Mammary epithelial cell (primary cell): ENCODE measurements at regions of chr6 and their contacts with region 1.

Region 1: GRCh38 chr6:30914076-30914853 is at the start of gene VARS2:
- DNase-seq: peak; percentile 94
- H3K4me3 ChIP-seq: peak within 1 kb of the TSS; percentile 23 to 65 (median 50)
- H3K27ac ChIP-seq: peak within 1 kb of the TSS; percentile 55
- H3K4me1 ChIP-seq: peaks cover 26% of the 10 kb centered on the region
- H3K27me3 ChIP-seq: no peaks in the 10 kb centered on the region
- CTCF ChIP-seq: peak; percentile 26 to 59
- total RNA-seq, gene VARS2: 17.7 to 25.7 TPM

Region 2: GRCh38 chr6:30816791-30817739 is 97.2 kb before region 1 on chr6:
- CTCF ChIA-PET with region 1: no interaction called
- dilution Hi-C with region 1: no loop called
- in situ Hi-C with region 1: no loop called
- intact Hi-C with region 1: no loop called
- DNase-seq: no peak
- H3K4me3 ChIP-seq: no peak overlapping the region
- H3K27ac ChIP-seq: no peak overlapping the region
- H3K4me1 ChIP-seq: peaks cover 56% of the 10 kb centered on the region
- H3K27me3 ChIP-seq: no peaks in the 10 kb centered on the region
- CTCF ChIP-seq: no peak

Region 3: DNA sequence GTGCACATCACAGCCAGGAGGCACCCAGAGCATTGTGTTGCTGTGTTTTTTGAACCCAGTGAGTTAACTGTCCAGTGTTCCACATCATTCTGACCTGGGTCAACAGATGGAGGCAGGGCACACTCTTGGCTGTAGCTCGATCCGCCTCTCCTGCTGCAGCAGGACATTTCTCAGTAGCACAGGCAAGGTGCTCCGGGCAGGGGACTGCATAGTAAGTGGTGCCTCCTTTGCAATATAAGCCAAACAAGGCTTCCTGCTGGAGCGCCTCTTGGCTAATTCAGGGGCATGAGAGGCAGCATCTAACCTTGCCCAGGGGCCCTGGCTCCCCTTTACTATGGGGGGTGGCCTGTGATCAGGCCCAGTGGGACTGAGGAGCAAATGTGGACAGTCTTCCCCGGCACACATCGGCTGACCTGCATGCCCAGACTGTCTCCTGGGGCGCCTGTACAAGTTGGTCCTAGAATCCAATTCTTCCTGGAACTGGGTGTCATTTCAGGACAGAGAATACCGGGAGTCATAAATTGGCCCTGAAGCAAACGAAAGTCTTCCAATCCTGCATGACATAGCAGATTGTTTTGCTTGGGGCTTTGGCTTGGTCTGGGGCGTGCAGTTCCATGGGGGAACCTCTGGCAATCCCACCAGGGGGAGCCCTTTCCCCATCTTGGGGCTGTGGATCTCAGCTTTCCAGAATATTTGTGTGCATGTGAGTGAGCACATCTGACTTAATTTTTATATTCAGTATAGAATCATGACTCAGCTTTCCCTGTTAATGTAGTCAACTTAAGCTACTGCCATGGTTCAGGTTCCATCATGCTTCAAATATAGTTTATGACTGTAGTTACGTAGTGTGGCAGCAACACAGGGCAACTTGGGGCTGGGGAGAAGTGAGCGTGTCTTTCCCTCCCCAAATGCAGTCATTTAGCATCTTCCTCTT is 86.0 kb before region 1 on chr6:
- CTCF ChIA-PET with region 1: interaction called, 9 read pairs
- dilution Hi-C with region 1: no loop called
- in situ Hi-C with region 1: no loop called
- intact Hi-C with region 1: loop called (anchors 1 kb)
- DNase-seq: peak; percentile 88
- H3K4me3 ChIP-seq: no peak overlapping the region
- H3K27ac ChIP-seq: peak overlapping the region; percentile 58
- H3K4me1 ChIP-seq: peaks cover 28% of the 10 kb centered on the region
- H3K27me3 ChIP-seq: no peaks in the 10 kb centered on the region
- CTCF ChIP-seq: peak; percentile 95

Region 4: GRCh38 chr6:30883685-30884520 is 30.4 kb before region 1 on chr6 and contains the start of gene DDR1:
- CTCF ChIA-PET with region 1: interaction called, 5 read pairs
- dilution Hi-C with region 1: no loop called
- in situ Hi-C with region 1: no loop called
- intact Hi-C with region 1: loop called (anchors 1 kb)
- DNase-seq: peak; percentile 89
- H3K4me3 ChIP-seq: peak within 1 kb of the TSS; percentile 60 to 76 (median 73)
- H3K27ac ChIP-seq: peak within 1 kb of the TSS; percentile 95
- H3K4me1 ChIP-seq: peaks cover 58% of the 10 kb centered on the region
- H3K27me3 ChIP-seq: no peaks in the 10 kb centered on the region
- CTCF ChIP-seq: no peak
- total RNA-seq, gene DDR1: 192 to 315 TPM

Region 5: GRCh38 chr6:31042806-31043205 is 128.5 kb after region 1 on chr6:
- CTCF ChIA-PET with region 1: interaction called, 3 read pairs
- dilution Hi-C with region 1: no loop called
- in situ Hi-C with region 1: no loop called
- intact Hi-C with region 1: loop called (anchors 1 kb)
- DNase-seq: peak; percentile 57
- H3K4me3 ChIP-seq: no peak overlapping the region
- H3K27ac ChIP-seq: no peak overlapping the region
- H3K4me1 ChIP-seq: no peaks in the 10 kb centered on the region
- H3K27me3 ChIP-seq: no peaks in the 10 kb centered on the region
- CTCF ChIP-seq: peak; percentile 26 to 61

Region 6: DNA sequence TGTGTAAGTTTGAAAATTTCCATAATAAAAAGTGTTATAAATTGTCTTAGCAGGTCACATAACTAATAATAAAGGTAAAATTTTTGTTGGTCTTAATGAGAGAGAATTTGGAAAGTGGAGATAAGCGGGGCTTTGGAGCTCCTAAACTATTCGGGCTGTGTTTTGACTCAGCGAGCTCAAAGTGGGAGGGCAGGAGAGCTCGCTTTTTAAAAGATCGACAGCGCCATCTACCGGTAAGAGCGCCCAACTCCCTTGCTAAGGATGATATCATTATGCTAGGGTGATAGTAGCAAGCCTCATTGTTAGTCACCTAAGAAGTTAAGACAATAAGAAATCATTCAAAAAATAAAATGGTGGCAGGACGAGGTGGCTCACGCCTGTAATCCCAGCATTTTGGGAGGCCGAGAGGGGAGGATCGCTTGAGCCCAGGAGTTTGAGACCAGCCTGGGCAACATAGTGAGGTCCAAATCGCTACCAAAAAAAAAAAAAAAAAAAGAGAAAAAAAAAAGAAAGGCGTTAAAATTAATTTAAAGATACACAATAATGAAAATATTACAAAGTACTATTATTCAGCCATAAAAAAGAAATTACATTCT is 173.3 kb after region 1 on chr6:
- CTCF ChIA-PET with region 1: interaction called, 6 read pairs
- dilution Hi-C with region 1: no loop called
- in situ Hi-C with region 1: no loop called
- intact Hi-C with region 1: loop called (anchors 1 kb)
- DNase-seq: peak; percentile 73
- H3K4me3 ChIP-seq: no peak overlapping the region
- H3K27ac ChIP-seq: no peak overlapping the region
- H3K4me1 ChIP-seq: peaks cover 8% of the 10 kb centered on the region
- H3K27me3 ChIP-seq: no peaks in the 10 kb centered on the region
- CTCF ChIP-seq: peak; percentile 74

Region 7: DNA sequence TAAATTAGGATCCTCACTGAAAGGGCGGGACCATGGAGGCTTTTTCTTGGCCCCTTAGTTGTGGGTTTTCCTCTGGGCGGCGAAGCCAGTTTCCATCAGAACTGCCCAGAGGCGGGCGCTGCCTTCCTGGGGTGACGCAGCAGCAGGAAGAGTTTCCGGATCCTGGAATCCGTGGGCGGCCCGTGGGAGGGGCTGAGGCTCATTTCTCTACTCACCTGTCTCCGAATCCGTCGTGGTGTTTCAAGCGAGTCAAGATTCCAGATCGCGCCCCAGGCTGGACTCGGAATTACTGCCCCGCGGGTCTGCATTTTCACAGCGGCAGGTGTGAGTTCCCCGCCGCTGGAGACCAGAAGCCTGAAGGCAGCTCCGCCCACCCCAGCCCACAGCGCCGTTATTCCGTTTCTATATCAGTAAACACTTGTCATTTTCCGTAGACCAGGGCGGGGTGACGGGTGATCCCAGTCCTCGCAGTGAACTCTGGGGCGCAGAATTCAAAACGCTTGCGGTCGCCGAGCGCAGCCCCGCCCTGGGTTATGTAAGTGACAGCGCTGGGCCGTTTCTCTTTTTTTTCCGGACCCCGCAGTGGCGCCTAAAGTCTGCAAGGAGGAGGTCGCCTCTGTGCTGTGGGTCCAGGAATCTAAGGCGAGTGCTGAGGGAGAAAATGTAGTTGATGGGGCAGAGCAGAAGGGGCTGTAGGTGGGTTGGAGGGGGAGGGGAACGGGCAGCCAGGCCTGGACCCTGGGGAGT is 283.5 kb after region 1 on chr6:
- CTCF ChIA-PET with region 1: no interaction called
- dilution Hi-C with region 1: no loop called
- in situ Hi-C with region 1: no loop called
- intact Hi-C with region 1: loop called (anchors 2 kb)
- DNase-seq: peak; percentile 82
- H3K4me3 ChIP-seq: peak overlapping the region; percentile 51 to 58 (median 57)
- H3K27ac ChIP-seq: peak overlapping the region; percentile 87
- H3K4me1 ChIP-seq: peaks cover 10% of the 10 kb centered on the region
- H3K27me3 ChIP-seq: no peaks in the 10 kb centered on the region
- CTCF ChIP-seq: no peak